ENCODE measurements at regions of chr4 and their contacts with region 1.

Region 1: DNA sequence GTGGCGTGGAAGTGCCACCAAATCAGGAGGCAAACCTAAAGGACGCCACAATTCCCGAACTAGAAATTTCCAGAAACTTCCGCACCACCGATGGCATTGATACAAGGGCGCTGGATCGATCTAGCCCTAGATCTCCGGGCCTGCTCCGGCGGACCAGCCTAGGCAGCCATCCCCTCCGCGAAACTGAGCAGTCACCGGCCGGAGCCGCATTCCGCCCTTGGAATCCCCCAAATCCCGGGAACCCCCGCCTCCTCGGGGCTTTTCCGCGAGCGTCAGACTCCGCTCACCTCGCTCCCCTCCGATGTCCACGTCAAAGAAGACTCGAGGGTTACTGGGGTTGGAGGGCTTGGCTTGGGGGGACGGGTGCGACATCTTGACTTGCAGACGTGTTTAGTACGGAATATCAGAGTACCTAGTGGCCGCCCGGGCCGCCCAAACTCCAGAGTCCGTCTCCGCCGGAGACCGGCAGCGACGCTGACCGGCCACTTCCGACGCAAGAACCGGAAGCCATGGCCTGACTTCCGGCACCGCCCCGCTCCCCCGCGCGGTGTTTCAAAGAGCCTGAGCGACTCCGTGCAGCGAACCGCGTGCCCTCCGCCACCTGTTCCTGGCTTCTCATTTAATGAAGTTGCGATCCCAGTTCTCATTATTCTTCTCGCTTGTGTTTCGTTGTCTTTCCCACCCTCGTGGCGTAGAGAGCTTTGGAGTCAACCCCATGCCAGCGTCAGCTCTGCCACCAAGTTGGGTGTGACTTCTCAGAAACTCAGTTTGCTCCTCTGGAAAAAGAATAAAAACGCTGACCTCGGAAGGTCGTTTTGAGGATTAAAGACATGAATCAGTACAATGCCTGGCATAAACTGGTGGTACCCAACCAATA is at the start of gene PPID:
- ATAC-seq: peak; percentile 93 to 98 (median 97)
- H3K4me3 ChIP-seq: peak within 1 kb of the TSS; percentile 65 to 85 (median 81)
- H3K27ac ChIP-seq: peak within 1 kb of the TSS; percentile 73 to 89
- H3K4me1 ChIP-seq: peaks cover 0 to 6% of the 10 kb centered on the region in 2 donors
- total RNA-seq, gene PPID: 36.9 to 68.3 (median 46.7) TPM

Region 2: GRCh38 chr4:158146736-158147135 is 576.4 kb before region 1 on chr4:
- in situ Hi-C with region 1: no loop called
- ATAC-seq: no peak
- H3K4me3 ChIP-seq: no peak overlapping the region
- H3K27ac ChIP-seq: no peak overlapping the region
- H3K4me1 ChIP-seq: no peaks in the 10 kb centered on the region

Region 3: GRCh38 chr4:159175085-159175988 is 452.2 kb after region 1 on chr4:
- in situ Hi-C with region 1: loop called in 1 of 9 experiments (anchors 25 kb)
- ATAC-seq: peak; percentile 89 to 98 (median 96)
- H3K4me3 ChIP-seq: peak overlapping the region in 4 of 5 donors; percentile 7 to 32 (median 22)
- H3K27ac ChIP-seq: peak overlapping the region; percentile 9 to 26
- H3K4me1 ChIP-seq: peaks cover 15 to 26% of the 10 kb centered on the region in 2 donors

Measured in motor neuron (in vitro differentiated cells).